ENCODE measurements at regions of chr13 and their contacts with region 1.

Region 1: DNA sequence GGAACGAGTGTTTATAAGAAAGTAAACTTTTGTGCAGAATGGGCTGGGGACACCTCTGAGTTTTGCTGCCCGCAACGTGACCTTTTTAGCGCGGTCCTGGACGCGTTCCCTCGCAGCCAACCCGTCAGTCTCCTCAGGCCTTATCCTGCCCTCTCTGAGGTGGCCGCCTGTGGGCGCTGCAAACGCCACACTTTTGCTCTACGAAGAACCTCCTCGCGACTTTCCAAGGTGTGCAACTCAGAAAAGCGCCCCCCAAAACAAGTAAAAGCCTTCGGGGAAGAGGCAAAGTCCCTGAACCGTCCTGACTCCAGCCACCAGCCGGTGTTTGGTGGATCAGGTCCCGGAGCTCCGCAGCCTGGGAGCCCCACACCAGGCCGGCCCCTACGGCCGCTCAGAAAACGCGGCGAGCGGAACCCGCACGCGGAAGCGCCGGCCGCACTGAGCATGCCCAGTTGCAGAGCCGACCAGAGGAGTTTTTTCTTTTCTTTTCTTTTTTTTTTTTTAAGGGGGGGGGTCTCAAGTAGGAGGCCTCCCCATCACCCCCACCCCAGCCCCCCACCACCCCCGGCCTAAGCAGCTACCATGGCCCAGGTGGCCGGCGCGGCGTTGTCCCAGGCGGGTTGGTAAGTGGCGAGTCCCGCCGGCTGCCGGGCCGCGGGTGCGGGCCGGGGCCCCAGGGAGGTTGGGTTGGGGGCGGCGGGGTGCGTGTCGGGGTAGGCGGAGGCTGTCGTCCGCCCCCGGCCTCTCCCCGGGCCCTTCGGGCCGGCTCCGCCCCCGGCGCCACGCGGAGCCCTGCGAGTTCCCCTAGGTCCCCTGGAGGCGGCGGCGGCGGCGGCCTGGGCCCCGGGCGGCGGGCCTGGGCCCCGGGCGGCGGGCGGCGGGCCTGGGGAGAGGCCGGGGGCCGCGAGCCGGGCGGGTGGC is at the start of gene TDRD3:
- DNase-seq: peak; percentile 91
- ATAC-seq: peak; percentile 74
- H3K4me3 Mint-ChIP-seq: peak within 1 kb of the TSS; percentile 89
- H3K27ac Mint-ChIP-seq: peak within 1 kb of the TSS; percentile 95
- H3K4me1 Mint-ChIP-seq: peaks cover 42% of the 10 kb centered on the region
- H3K27me3 Mint-ChIP-seq: no peaks in the 10 kb centered on the region
- total RNA-seq, gene TDRD3: 25.0 to 26.1 TPM

Region 2: GRCh38 chr13:60431108-60431700 is 34.2 kb after region 1 on chr13:
- CTCF ChIA-PET with region 1: interaction called, 18 read pairs
- DNase-seq: no peak
- ATAC-seq: peak; percentile 78
- H3K4me3 Mint-ChIP-seq: no peak overlapping the region
- H3K27ac Mint-ChIP-seq: no peak overlapping the region
- H3K4me1 Mint-ChIP-seq: peaks cover 34% of the 10 kb centered on the region
- H3K27me3 Mint-ChIP-seq: no peaks in the 10 kb centered on the region

Measured in activated CD8-positive, alpha-beta memory T cell treated with anti-CD3 and anti-CD28 coated beads, Interleukin-2, amount 10 ng/mL, durations not matched to agents 7 days and 5 days (primary cell).